ENCODE measurements at regions of chr1 and their contacts with region 1.

Region 1: DNA sequence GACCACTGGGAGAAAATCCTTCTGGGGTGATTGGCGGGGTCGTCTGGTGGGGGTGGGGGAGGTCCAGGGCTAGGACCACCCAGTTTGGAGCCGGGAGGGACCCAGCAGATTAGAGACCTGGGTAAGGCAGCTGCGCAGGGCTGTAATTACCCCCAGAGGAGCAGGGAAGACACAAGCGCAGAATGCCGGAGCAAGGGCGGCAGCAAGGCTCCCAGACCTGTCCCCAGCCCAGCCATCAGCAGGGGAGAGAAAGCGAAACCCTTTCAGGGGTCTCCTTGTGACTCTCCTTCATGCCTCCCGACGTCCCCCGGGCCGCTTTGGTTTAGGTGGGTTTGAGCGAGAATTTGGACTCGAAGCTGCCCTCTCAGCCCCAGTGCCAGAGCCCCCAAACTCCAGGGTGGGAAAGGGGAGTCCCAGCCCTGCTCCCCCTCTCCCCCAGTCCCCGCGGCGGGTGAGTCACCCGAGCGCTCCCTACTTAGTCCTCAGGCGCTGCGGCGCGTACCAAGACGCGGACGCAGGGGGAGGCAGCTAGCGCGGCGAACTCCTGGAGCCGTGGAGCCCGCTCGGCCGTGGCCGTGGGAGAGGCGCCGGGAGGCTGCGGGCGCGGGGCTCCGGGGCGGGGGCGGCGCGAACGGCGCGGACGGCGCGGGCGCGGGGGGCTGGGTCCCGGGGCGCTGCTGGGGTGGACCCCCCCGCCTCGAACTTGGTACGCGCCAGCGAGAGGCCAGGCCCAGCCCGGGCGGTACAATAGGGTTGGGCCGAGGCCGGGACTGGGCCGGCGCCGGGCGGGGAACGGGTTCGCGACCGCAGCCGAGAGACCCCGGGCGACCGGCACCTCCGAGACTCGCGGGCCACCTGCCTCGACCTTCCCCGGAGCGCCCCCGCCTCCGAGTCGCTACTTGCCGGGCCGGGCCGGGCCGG is at the start of gene MAP7D1:
- DNase-seq: peak; percentile 97
- total RNA-seq, gene MAP7D1: 130 to 167 TPM

Region 2: DNA sequence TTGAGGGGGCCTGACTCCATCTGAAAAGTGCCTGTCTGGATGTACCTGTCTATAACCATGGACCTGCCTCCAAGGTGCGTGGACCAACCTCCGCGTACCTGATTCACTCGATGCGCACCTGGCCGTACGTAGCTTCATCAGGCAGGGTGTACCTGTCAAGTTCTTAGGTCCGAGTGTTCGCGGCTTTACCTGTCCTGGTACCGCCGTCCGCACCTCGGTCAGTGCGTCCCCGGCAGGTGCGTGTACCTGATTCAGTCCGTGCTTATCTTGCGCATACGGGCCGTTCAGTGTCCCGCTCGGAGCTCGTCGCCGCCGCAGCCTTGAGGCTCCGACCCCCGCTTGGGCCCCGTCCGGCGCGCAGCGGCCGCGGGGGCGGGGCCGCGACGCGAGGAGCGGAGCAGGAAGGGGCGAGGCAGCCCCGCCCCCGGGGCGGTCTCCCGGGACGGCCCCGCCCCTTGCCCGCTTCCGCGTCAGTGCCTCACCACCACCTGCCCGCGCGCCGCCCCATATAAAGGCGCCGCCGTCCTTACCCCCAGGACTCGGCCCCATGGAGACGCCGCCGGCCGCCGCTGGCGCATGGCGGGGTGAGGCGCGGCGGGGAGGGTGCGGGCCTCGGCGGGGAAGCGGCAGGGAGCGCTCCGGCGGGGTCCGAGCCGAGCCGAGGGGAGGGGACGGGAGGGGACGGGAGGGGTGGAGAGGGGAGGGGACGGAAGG is 1318.5 kb after region 1 on chr1 and contains the start of gene ZC3H12A:
- intact Hi-C with region 1: loop called in 1 of 2 experiments (anchors 5 kb)
- DNase-seq: peak; percentile 98
- total RNA-seq, gene ZC3H12A: 7.7 to 18.4 TPM

Measured in posterior vena cava (tissue), 2 donors.